Endothelial cell of umbilical vein (primary cell): ENCODE measurements at regions of chr18 and their contacts with region 1.

Region 1: GRCh38 chr18:76709659-76710645 is 112.4 kb upstream of the ZNF236 start:
- DNase-seq: peak; percentile 55
- H3K4me3 ChIP-seq: no peak overlapping the region
- H3K27ac ChIP-seq: no peak overlapping the region
- H3K4me1 ChIP-seq: no peaks in the 10 kb centered on the region
- H3K27me3 ChIP-seq: no peaks in the 10 kb centered on the region
- CTCF ChIP-seq: peak; percentile 72 to 84
- POLR2A ChIP-seq: no peak

Region 2: DNA sequence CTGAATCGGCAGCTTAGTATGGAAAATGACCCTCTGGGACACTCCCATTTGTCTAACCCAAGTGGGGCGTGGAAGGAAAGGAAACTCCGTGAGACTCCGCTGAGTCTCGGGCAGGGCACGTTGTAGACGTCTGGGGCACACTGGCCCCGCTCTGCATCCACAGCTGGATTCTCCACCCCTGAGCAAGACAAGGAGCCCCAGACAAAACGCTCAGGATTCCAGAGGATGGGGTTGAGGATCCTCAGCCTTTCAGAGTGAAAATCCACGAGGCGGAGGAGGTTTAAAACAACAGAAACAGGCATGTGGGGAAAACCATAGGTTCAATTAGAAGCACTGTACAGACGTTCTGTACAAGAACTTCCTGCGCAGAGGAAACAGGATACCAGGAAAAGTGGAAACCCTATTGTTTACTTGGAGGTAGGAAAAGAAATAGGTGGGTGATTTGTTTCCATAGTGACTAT is 12.5 kb before region 1 on chr18:
- CTCF ChIA-PET with region 1: interaction called, 12 read pairs
- POLR2A ChIA-PET with region 1: no interaction called
- dilution Hi-C with region 1: no loop called
- intact Hi-C with region 1: no loop called
- DNase-seq: peak; percentile 47
- H3K4me3 ChIP-seq: peak overlapping the region; percentile 16 to 58 (median 23)
- H3K27ac ChIP-seq: peak overlapping the region; percentile 52
- H3K4me1 ChIP-seq: peaks cover 12% of the 10 kb centered on the region
- H3K27me3 ChIP-seq: no peaks in the 10 kb centered on the region
- CTCF ChIP-seq: no peak
- POLR2A ChIP-seq: no peak

Region 3: DNA sequence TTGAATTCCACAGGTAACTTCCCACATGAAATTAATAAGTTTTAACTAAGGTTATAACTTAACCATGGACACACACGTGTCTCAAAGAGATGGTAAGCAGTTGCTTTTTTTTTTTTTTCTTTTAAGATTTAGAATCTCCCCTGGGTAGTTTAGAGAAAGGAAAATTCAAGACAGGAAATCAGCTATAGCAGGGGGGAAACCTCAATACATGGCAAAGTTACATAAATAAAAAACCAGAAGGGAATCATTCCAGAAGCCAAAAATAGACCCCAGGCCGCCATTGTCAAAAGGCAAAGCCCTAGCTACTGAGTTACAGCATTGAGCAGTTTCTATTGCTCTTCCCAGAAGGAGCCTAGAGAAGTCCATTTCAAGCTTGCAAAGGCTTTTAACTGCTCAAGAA is 20.9 kb after region 1 on chr18:
- CTCF ChIA-PET with region 1: no interaction called
- POLR2A ChIA-PET with region 1: no interaction called
- dilution Hi-C with region 1: no loop called
- intact Hi-C with region 1: no loop called
- DNase-seq: no peak
- H3K4me3 ChIP-seq: no peak overlapping the region
- H3K27ac ChIP-seq: no peak overlapping the region
- H3K4me1 ChIP-seq: no peaks in the 10 kb centered on the region
- H3K27me3 ChIP-seq: no peaks in the 10 kb centered on the region
- CTCF ChIP-seq: no peak
- POLR2A ChIP-seq: no peak